Heart left ventricle (tissue), 16 donors: ENCODE measurements at regions of chr1 and their contacts with region 1.

Region 1: GRCh38 chr1:185681034-185681633 is 53.1 kb upstream of the HMCN1 start:
- DNase-seq: peak in 1 of 5 donors; percentile 25
- ATAC-seq: peak; percentile 62 to 85 (median 68)
- H3K4me3 ChIP-seq: no peak overlapping the region
- H3K27ac ChIP-seq: no peak overlapping the region
- H3K4me1 ChIP-seq: peaks cover 0 to 42% (median 7%) of the 10 kb centered on the region in 12 donors
- H3K27me3 ChIP-seq: no peaks in the 10 kb centered on the region
- CTCF ChIP-seq: peak; percentile 52 to 77 (median 66)
- POLR2A ChIP-seq: no peak

Region 2: GRCh38 chr1:185238447-185238846 is 442.7 kb before region 1 on chr1:
- intact Hi-C with region 1: loop called in 5 of 10 experiments (anchors 5 to 10 kb)
- DNase-seq: no peak
- ATAC-seq: no peak
- H3K4me3 ChIP-seq: no peak overlapping the region
- H3K27ac ChIP-seq: no peak overlapping the region
- H3K4me1 ChIP-seq: peaks cover 0 to 16% (median 6%) of the 10 kb centered on the region in 12 donors
- H3K27me3 ChIP-seq: no peaks in the 10 kb centered on the region
- CTCF ChIP-seq: peak; percentile 21 to 62 (median 43)
- POLR2A ChIP-seq: no peak

Region 3: DNA sequence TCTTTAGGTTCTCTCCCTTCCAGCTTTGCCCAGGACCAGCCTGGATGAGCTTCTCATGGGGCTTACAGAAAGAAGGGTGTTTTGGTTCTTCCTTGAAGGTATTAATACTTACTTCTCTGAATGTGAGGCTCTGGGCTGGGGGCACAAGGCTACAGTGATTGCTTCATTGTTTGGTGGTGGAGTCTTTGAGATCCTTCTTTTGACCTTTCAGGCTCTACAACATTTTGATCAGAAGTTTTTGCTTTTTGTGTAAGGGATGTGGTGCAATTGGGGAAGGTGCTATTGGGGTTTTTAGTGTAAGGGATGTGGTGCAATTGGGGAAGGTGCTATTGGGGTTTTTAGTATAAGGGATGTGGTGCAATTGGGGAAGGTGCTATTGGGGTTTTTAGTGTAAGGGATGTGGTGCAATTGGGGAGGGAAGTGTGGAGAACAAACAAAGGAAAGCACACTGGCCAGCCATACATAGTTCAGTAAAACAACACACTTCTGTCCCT is 260.5 kb before region 1 on chr1:
- intact Hi-C with region 1: loop called in 5 of 10 experiments (anchors 5 to 10 kb)
- DNase-seq: no peak
- ATAC-seq: peak in 2 of 4 donors; percentile 42 to 59
- H3K4me3 ChIP-seq: no peak overlapping the region
- H3K27ac ChIP-seq: peak overlapping the region in 1 of 12 donors; percentile 69
- H3K4me1 ChIP-seq: peaks cover 0 to 9% (median 0%) of the 10 kb centered on the region in 12 donors
- H3K27me3 ChIP-seq: no peaks in the 10 kb centered on the region
- CTCF ChIP-seq: no peak
- POLR2A ChIP-seq: no peak

Region 4: DNA sequence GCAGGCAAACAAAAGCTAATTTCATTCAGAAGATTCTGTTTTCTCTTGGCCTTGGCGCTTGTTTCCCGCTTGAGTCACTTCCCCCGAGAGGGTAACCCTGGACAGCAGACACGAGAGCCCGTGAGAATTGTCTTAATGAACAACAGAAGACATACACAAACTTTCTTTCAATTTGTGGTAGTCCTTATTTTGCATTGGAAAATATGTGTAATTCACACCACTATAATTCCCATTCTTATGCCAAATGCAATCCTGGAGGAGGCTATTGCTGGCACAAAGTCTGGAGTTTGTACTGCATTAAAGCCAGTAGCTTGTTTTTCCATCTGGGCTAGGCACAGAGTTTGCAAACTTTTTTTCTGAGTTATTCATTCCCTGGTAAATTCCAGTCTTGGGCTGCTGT is 254.3 kb before region 1 on chr1:
- intact Hi-C with region 1: loop called in 6 of 10 experiments (anchors 2 to 10 kb)
- DNase-seq: peak in 4 of 5 donors; percentile 41 to 54 (median 53)
- ATAC-seq: peak; percentile 80 to 90 (median 84)
- H3K4me3 ChIP-seq: no peak overlapping the region
- H3K27ac ChIP-seq: peak overlapping the region in 11 of 12 donors; percentile 5 to 81 (median 47)
- H3K4me1 ChIP-seq: peaks cover 0 to 23% (median 8%) of the 10 kb centered on the region in 12 donors
- H3K27me3 ChIP-seq: no peaks in the 10 kb centered on the region
- CTCF ChIP-seq: peak in 2 of 12 donors; percentile 35 to 36
- POLR2A ChIP-seq: no peak